Ovary (tissue), 10 donors: ENCODE measurements at regions of chr9 and their contacts with region 1.

Region 1: DNA sequence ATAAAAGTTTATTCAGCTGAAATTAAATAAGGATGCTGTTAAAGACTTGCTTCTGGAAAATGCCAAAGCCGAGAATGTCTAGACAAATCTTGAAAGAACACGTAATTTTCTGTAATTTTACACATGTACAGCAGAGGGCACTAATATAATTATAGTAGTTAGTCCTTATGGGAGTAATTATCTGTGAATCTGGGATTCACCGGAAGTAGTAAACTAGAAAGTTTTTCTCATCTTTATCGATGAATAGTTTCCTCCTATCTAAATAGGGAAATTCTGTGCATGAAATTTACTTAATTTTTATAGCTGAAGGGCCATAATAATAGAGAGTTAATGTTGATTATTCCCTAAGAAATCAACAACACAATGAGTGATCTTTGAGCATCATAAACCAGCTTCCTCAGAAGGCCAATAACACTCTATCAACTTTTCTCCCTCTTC is 18.4 kb upstream of the CNTLN start:
- DNase-seq: no peak
- H3K4me3 ChIP-seq: no peak overlapping the region
- H3K27ac ChIP-seq: no peak overlapping the region
- H3K4me1 ChIP-seq: no peaks in the 10 kb centered on the region
- H3K27me3 ChIP-seq: no peaks in the 10 kb centered on the region
- CTCF ChIP-seq: peak; percentile 9 to 51 (median 31)
- EP300 ChIP-seq: no peak
- POLR2A ChIP-seq: no peak

Region 2: DNA sequence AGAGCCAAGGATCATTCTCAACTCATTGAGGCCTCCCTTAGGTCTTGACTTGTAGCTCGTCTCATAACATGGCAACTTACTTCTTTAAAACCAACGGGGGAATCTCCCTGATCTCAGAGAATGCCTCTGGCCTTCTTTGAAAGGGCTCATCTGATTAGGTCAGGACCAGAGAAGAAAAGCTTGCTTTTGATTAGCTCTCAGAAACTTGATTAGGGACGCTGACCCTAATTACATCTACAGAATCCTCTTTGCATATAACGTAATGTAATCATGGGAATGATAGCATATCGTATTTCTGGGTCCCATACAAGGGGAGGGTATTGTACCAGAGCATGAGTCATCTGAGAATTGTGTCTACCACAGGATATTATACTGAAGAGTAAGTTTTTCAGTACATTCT is 337.3 kb after region 1 on chr9:
- intact Hi-C with region 1: loop called in 1 of 4 experiments (anchors 5 kb)
- DNase-seq: no peak
- H3K4me3 ChIP-seq: no peak overlapping the region
- H3K27ac ChIP-seq: no peak overlapping the region
- H3K4me1 ChIP-seq: no peaks in the 10 kb centered on the region
- H3K27me3 ChIP-seq: no peaks in the 10 kb centered on the region
- CTCF ChIP-seq: no peak
- EP300 ChIP-seq: no peak
- POLR2A ChIP-seq: no peak

Region 3: GRCh38 chr9:17462869-17463464 is 346.5 kb after region 1 on chr9:
- intact Hi-C with region 1: loop called in 1 of 4 experiments (anchors 10 kb)
- DNase-seq: peak in 4 of 5 donors; percentile 9 to 48 (median 23)
- H3K4me3 ChIP-seq: no peak overlapping the region
- H3K27ac ChIP-seq: no peak overlapping the region
- H3K4me1 ChIP-seq: no peaks in the 10 kb centered on the region
- H3K27me3 ChIP-seq: no peaks in the 10 kb centered on the region
- CTCF ChIP-seq: peak in 2 of 3 donors; percentile 65 to 78
- EP300 ChIP-seq: no peak
- POLR2A ChIP-seq: no peak